ENCODE measurements at regions of chr2 and their contacts with region 1.

Region 1: DNA sequence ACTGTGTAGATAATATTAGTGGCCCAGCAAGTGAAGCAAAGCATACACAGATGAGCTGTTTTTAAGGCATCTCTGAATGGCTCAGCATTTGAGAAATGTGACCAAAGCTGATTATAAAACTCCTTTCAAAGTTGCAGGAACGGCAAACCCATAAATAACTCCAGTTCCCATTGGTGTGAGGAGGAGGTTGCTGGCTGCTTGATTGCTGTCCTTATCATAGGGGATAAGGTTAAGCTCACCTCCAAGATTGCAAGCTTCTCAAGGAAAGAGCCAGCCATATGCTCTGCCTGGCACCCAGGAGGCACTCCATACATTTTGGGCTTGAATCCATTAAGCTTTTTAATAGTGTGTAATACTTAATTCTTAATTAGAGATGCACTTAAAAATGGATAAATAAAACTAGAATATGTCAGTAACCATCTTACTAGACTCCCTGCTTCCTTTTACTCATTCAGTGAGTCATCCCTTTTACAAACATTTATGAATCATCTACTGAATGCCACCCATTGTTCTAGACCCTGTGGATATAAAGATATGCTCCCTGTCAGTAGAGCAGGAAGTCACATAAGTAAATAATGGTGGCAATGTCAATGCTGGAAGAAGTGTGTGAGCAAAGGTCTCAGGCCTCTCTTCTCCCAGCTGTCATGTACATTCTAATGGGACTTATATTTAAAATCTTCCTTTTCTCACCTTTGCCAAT is 99.3 kb downstream of the SPATS2L start:
- DNase-seq: no peak
- H3K4me3 Mint-ChIP-seq: peak overlapping the region; percentile 38
- H3K27ac Mint-ChIP-seq: peak overlapping the region; percentile 68
- H3K4me1 Mint-ChIP-seq: peaks cover 47% of the 10 kb centered on the region
- H3K27me3 Mint-ChIP-seq: no peaks in the 10 kb centered on the region

Region 2: GRCh38 chr2:199994371-199994770 is 411.4 kb before region 1 on chr2:
- intact Hi-C with region 1: no loop called
- DNase-seq: no peak
- H3K4me3 Mint-ChIP-seq: no peak overlapping the region
- H3K27ac Mint-ChIP-seq: no peak overlapping the region
- H3K4me1 Mint-ChIP-seq: no peaks in the 10 kb centered on the region
- H3K27me3 Mint-ChIP-seq: peaks cover 1% of the 10 kb centered on the region

Region 3: GRCh38 chr2:200156166-200156835 is 249.4 kb before region 1 on chr2:
- intact Hi-C with region 1: no loop called
- DNase-seq: no peak
- H3K4me3 Mint-ChIP-seq: no peak overlapping the region
- H3K27ac Mint-ChIP-seq: no peak overlapping the region
- H3K4me1 Mint-ChIP-seq: peaks cover 2% of the 10 kb centered on the region
- H3K27me3 Mint-ChIP-seq: no peaks in the 10 kb centered on the region

Region 4: DNA sequence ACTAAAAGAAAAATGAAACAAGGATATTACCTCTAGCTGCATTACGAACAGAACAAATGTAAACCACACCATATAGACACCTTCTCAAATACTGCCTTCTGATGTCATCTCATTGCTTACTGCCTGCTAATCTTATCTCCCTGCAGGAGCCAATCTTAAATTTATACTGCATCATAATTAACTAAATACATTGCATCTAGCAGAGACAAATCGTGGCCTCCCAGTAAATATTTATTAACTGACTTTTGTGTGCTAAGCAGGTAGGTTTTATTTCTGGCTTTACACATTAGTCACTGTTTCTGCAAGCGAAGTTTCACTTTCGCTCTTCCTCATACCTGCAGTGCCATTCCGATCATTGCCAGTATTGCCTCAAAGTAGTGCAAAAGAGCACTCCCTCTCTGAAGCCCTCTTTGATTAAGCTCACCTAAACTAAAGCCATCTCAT is 31.8 kb before region 1 on chr2:
- intact Hi-C with region 1: loop called (anchors 1 kb)
- DNase-seq: peak; percentile 86
- H3K4me3 Mint-ChIP-seq: peak overlapping the region; percentile 84
- H3K27ac Mint-ChIP-seq: peak overlapping the region; percentile 80
- H3K4me1 Mint-ChIP-seq: peaks cover 52% of the 10 kb centered on the region
- H3K27me3 Mint-ChIP-seq: no peaks in the 10 kb centered on the region

Region 5: GRCh38 chr2:200447139-200447855 is 41.5 kb after region 1 on chr2:
- intact Hi-C with region 1: loop called (anchors 2 kb)
- DNase-seq: no peak
- H3K4me3 Mint-ChIP-seq: peak overlapping the region; percentile 40
- H3K27ac Mint-ChIP-seq: peak overlapping the region; percentile 86
- H3K4me1 Mint-ChIP-seq: peaks cover 24% of the 10 kb centered on the region
- H3K27me3 Mint-ChIP-seq: no peaks in the 10 kb centered on the region

Region 6: GRCh38 chr2:200713003-200713703 is 307.4 kb after region 1 on chr2:
- intact Hi-C with region 1: no loop called
- DNase-seq: peak; percentile 97
- H3K4me3 Mint-ChIP-seq: peak overlapping the region; percentile 74
- H3K27ac Mint-ChIP-seq: peak overlapping the region; percentile 99
- H3K4me1 Mint-ChIP-seq: peaks cover 29% of the 10 kb centered on the region
- H3K27me3 Mint-ChIP-seq: no peaks in the 10 kb centered on the region

Measured in activated CD4-positive, alpha-beta T cell treated with anti-CD3 and anti-CD28 coated beads, Interleukin-2, amount 10 ng/mL, durations not matched to agents 24 days and 14 days (primary cell).